Activated T-helper 1 cell treated with anti-CD3 and anti-CD28 coated beads, Interleukin-12 subunit alpha, Interleukin-12 subunit beta, Interleukin-2, Interleukin-4 antibody, amounts not matched to agents 30 ng/mL and 10 ng/mL and 1 ng/mL, durations not matched to agents 14 hours and 24 hours and 36 hours (primary cell): ENCODE measurements at regions of chr1 and their contacts with region 1.

Region 1: DNA sequence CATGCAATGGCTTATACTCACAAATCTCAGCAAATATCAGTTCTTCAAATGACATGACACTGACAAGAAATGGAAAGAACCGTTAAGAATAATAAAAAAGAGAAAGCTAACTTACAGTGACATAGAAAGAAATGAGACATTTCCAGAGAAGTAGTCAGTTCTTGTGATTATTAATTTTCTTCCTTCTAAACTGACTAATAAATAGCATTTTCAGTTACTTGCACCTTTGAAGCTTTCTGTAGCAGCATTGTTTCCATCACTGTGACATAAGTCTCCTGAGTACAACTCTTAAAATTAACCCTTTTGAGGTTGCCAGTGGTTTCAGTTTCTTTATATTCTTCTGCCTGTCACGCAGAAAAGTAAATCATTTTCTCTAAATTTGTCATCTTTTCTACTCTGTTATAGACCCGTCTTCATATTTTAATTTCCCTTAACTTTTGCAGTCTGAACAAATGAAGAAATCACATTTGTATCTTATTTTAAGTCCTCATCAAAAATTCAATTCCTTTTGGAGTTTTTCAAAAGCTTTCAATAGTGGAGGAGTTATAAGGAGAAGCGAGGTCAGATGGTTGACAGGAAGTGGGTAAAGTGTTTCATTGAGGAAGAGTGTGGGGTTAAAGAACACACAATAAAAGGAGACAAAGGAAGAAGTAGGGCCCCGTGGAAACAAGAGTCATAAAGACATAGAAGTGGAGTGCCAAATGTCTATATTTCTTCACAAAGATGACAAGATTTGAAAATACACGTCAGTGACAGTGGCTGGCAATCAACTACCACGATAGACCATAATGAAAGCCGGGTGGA is 57.9 kb upstream of the S1PR1 start:
- DNase-seq: peak; percentile 27
- H3K4me3 Mint-ChIP-seq: peak overlapping the region; percentile 76
- H3K27ac Mint-ChIP-seq: peak overlapping the region; percentile 98
- H3K4me1 Mint-ChIP-seq: peaks cover 65% of the 10 kb centered on the region
- H3K27me3 Mint-ChIP-seq: no peaks in the 10 kb centered on the region

Region 2: DNA sequence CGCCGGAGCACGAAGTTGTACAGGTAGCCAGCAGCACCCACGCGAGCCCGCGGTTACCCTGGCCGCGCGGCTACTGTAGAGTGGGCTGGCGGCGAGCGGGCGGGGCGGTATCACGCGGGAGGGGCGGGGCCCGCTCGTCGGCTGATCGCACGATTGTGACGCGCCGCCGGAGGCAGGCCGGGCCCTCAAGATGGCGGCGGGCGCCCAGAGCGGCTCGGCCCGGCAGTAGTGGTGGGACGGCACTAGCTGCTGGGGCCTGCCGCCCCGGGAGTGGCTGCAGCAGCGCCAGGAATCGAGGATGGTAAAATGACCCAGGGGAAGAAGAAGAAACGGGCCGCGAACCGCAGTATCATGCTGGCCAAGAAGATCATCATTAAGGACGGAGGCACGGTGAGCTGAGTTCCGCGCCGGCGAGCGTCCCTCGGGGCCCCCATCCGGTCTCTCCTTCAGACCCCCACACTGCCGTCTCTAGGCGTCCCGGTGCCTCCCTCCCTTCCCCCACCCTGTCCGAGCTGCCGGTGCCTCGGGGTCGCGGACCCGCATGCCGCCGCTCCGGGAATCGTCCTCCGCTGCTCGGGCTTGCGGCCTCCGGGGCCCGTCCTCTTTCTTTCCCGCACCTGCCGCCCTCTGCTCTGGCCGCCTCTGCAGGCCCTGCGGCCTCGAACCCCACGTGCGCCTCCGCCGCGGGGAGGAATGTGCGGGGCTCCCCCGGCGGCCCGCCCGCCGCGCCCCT is 1140.8 kb before region 1 on chr1:
- intact Hi-C with region 1: loop called (anchors 1 kb)
- DNase-seq: peak; percentile 85
- H3K4me3 Mint-ChIP-seq: peak overlapping the region; percentile 97
- H3K27ac Mint-ChIP-seq: peak overlapping the region; percentile 98
- H3K4me1 Mint-ChIP-seq: peaks cover 60% of the 10 kb centered on the region
- H3K27me3 Mint-ChIP-seq: no peaks in the 10 kb centered on the region

Region 3: GRCh38 chr1:100895540-100896483 is 283.1 kb before region 1 on chr1 and contains the start of gene SLC30A7:
- intact Hi-C with region 1: loop called (anchors 1 kb)
- DNase-seq: peak; percentile 95
- H3K4me3 Mint-ChIP-seq: peak within 1 kb of the TSS; percentile 93
- H3K27ac Mint-ChIP-seq: peak within 1 kb of the TSS; percentile 96
- H3K4me1 Mint-ChIP-seq: peaks cover 64% of the 10 kb centered on the region
- H3K27me3 Mint-ChIP-seq: no peaks in the 10 kb centered on the region
- total RNA-seq, gene SLC30A7: 42.6 and 51.2 TPM in 2 replicates

Region 4: DNA sequence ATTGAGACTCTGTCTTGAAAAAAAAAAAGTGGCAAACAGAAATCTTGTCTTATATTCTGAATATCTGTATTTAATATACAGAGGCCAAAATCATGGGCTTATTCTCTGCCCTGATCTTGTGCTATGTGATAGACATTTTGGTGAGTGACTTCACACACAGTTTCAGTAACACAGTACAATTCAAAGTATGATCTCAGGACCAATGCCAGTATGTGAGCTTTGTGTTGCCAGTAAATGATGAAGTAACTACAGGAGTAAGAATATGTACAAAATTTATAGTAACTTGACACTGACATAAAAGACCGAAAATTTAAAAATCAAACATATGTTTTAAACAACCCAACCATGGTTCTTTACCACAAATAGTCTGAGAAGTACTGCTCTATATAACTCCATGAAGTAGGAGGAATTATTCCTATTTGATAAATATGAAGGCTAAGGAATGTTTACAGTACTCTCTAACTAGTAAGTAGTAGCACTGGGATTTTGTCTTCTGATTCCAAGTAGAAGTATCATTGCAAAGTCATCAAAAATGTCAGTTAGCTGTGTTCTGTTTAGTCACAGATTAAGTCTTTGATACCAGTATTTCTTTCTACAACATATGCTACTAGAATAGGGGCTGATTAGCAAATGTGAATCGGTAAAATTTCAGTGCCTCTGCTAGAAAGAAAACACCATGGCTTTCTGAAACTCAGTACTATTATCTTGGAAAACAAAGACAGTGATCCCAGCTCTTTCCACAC is 178.6 kb before region 1 on chr1:
- intact Hi-C with region 1: no loop called
- DNase-seq: no peak
- H3K4me3 Mint-ChIP-seq: no peak overlapping the region
- H3K27ac Mint-ChIP-seq: no peak overlapping the region
- H3K4me1 Mint-ChIP-seq: peaks cover 29% of the 10 kb centered on the region
- H3K27me3 Mint-ChIP-seq: no peaks in the 10 kb centered on the region

Region 5: GRCh38 chr1:101025657-101026504 is 153.0 kb before region 1 on chr1 and contains the start of gene DPH5:
- intact Hi-C with region 1: loop called (anchors 1 kb)
- DNase-seq: peak; percentile 84
- H3K4me3 Mint-ChIP-seq: peak within 1 kb of the TSS; percentile 93
- H3K27ac Mint-ChIP-seq: peak within 1 kb of the TSS; percentile 87
- H3K4me1 Mint-ChIP-seq: peaks cover 58% of the 10 kb centered on the region
- H3K27me3 Mint-ChIP-seq: no peaks in the 10 kb centered on the region
- total RNA-seq, gene DPH5: 31.7 and 32.2 TPM in 2 replicates

Region 6: DNA sequence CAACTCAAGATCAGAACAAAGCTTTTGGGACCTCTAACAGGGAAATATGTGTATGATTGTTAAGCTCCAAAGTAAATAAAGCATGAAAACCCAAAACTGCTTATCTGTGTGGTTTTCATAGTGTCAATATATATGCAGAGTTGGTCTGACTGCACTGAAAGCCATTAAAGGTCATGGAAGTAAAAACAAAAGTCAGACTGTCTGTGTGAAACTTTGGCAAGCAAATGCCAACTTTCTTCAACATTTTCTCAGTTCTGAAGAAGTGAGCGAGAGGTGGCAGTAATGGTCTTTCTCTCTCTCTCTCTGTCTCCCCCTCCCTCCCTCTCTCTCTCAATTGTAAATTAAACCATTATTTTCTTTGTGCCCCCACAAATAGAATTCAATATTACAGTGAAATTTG is 42.2 kb before region 1 on chr1:
- intact Hi-C with region 1: loop called (anchors 1 kb)
- DNase-seq: peak; percentile 26
- H3K4me3 Mint-ChIP-seq: peak overlapping the region; percentile 30
- H3K27ac Mint-ChIP-seq: peak overlapping the region; percentile 38
- H3K4me1 Mint-ChIP-seq: peaks cover 63% of the 10 kb centered on the region
- H3K27me3 Mint-ChIP-seq: no peaks in the 10 kb centered on the region

Region 7: GRCh38 chr1:101238681-101239094 is 59.8 kb after region 1 on chr1:
- intact Hi-C with region 1: loop called (anchors 1 kb)
- DNase-seq: peak; percentile 79
- H3K4me3 Mint-ChIP-seq: peak overlapping the region; percentile 97
- H3K27ac Mint-ChIP-seq: peak overlapping the region; percentile 95
- H3K4me1 Mint-ChIP-seq: peaks cover 77% of the 10 kb centered on the region
- H3K27me3 Mint-ChIP-seq: no peaks in the 10 kb centered on the region